Activated CD4-positive, alpha-beta memory T cell treated with anti-CD3 and anti-CD28 coated beads for 36 hours (primary cell): ENCODE measurements at regions of chr9 and their contacts with region 1.

Region 1: DNA sequence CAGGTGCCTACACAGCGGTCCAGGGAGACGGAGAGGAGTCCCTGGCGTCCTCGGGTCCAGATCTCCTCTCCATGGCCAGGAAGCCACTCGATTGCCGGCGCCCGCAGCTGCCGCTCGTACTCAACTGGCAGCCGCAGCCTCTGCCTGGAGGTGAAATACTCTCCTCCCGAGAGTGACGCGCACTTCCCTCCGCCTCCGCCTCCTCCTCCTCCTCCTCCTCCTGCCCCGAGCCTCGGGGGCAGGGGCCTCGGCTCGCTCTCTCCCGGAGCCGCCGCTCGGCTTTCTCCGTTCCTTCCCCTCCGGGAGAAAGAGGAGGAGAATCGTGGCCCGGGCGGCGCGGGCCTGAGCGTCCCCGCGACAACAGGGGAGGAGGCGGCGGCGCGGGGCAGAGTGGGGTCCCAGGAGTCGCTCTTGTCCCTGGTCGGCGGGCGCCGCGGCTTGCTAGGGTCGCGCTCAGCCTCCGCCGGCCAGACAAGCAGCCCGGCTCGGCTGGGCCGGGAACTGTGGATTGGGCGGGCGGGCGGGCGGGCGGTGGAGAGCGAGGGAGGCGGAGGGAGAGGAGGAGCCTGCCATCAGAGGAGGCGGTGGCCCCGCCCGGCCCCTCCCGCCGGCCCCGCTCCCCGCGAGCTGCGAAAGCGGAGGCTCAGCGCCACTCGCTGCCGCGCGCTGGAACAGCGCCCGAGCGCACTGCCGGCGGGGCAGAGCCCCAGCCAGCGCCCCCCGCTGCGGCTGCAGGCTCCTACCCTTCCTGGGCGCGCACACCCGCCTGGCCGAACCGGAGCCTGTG is at the start of gene CEMIP2:
- DNase-seq: peak; percentile 91
- H3K4me3 Mint-ChIP-seq: peak within 1 kb of the TSS; percentile 87
- H3K27ac Mint-ChIP-seq: peak within 1 kb of the TSS; percentile 91
- H3K4me1 Mint-ChIP-seq: peaks cover 29% of the 10 kb centered on the region
- H3K27me3 Mint-ChIP-seq: no peaks in the 10 kb centered on the region
- total RNA-seq, gene CEMIP2: 56.5 to 70.1 TPM

Region 2: DNA sequence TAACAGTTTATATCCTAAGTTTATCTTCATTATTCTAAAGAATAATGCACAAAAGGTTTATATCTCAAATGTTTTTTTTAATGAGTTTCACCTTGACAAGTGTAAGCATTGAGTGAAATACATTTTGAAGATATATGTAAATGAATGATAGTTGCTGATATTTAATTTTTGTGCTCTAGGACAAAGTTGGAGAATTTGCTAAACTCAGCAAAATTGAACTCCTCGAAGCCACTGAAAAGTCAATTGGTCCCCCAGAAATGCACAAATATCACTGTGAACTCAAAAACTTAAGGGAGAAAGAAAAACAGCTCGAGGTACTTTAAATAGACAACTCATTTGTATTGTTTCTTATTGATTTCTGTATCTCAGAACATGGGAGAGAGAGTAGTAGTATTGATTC is 1490.3 kb before region 1 on chr9:
- CTCF ChIA-PET with region 1: no interaction called
- POLR2A ChIA-PET with region 1: no interaction called
- intact Hi-C with region 1: no loop called
- DNase-seq: no peak
- H3K4me3 Mint-ChIP-seq: no peak overlapping the region
- H3K27ac Mint-ChIP-seq: no peak overlapping the region
- H3K4me1 Mint-ChIP-seq: peaks cover 22% of the 10 kb centered on the region
- H3K27me3 Mint-ChIP-seq: no peaks in the 10 kb centered on the region

Region 3: GRCh38 chr9:70413798-70414775 is 1354.5 kb before region 1 on chr9 and contains the start of gene KLF9:
- CTCF ChIA-PET with region 1: no interaction called
- POLR2A ChIA-PET with region 1: no interaction called
- intact Hi-C with region 1: loop called (anchors 5 kb)
- DNase-seq: peak; percentile 96
- H3K4me3 Mint-ChIP-seq: peak within 1 kb of the TSS; percentile 97
- H3K27ac Mint-ChIP-seq: peak within 1 kb of the TSS; percentile 100
- H3K4me1 Mint-ChIP-seq: peaks cover 37% of the 10 kb centered on the region
- H3K27me3 Mint-ChIP-seq: peaks cover 2% of the 10 kb centered on the region
- total RNA-seq, gene KLF9: 23.7 to 24.5 TPM

Region 4: GRCh38 chr9:71506821-71507220 is 261.8 kb before region 1 on chr9:
- CTCF ChIA-PET with region 1: no interaction called
- POLR2A ChIA-PET with region 1: no interaction called
- intact Hi-C with region 1: loop called (anchors 5 kb)
- DNase-seq: no peak
- H3K4me3 Mint-ChIP-seq: no peak overlapping the region
- H3K27ac Mint-ChIP-seq: no peak overlapping the region
- H3K4me1 Mint-ChIP-seq: no peaks in the 10 kb centered on the region
- H3K27me3 Mint-ChIP-seq: no peaks in the 10 kb centered on the region

Region 5: GRCh38 chr9:71704796-71705195 is 63.8 kb before region 1 on chr9:
- CTCF ChIA-PET with region 1: interaction called, 3 read pairs
- POLR2A ChIA-PET with region 1: no interaction called
- intact Hi-C with region 1: loop called (anchors 5 kb)
- DNase-seq: no peak
- H3K4me3 Mint-ChIP-seq: no peak overlapping the region
- H3K27ac Mint-ChIP-seq: peak overlapping the region; percentile 15
- H3K4me1 Mint-ChIP-seq: peaks cover 4% of the 10 kb centered on the region
- H3K27me3 Mint-ChIP-seq: no peaks in the 10 kb centered on the region

Region 6: DNA sequence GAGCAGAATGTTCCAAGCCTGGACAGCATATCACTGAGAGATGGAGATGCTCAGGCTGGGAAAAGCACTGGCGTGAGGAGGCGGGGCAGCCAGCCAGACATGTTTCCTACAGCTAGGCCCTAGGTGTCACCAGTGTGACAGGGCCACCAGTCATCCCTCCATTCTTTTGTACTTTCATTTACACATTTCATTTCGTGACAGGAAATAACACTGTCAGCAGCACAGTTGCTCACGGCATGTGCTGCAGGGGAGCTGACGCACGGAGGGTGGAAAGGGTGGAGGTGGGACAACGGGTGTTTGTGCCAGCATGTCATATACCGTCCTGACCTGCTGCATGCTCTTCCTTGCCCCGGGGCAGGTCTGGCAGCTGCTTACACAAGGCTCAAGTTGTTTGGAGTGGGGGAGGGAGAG is 14.5 kb after region 1 on chr9:
- CTCF ChIA-PET with region 1: interaction called, 56 read pairs
- POLR2A ChIA-PET with region 1: interaction called, 54 read pairs
- intact Hi-C with region 1: loop called (anchors 1 kb)
- DNase-seq: peak; percentile 94
- H3K4me3 Mint-ChIP-seq: peak overlapping the region; percentile 71
- H3K27ac Mint-ChIP-seq: peak overlapping the region; percentile 96
- H3K4me1 Mint-ChIP-seq: peaks cover 43% of the 10 kb centered on the region
- H3K27me3 Mint-ChIP-seq: no peaks in the 10 kb centered on the region

Region 7: GRCh38 chr9:71830929-71831328 is 62.3 kb after region 1 on chr9:
- CTCF ChIA-PET with region 1: no interaction called
- POLR2A ChIA-PET with region 1: no interaction called
- intact Hi-C with region 1: no loop called
- DNase-seq: no peak
- H3K4me3 Mint-ChIP-seq: no peak overlapping the region
- H3K27ac Mint-ChIP-seq: no peak overlapping the region
- H3K4me1 Mint-ChIP-seq: no peaks in the 10 kb centered on the region
- H3K27me3 Mint-ChIP-seq: no peaks in the 10 kb centered on the region

Region 8: GRCh38 chr9:72022841-72023240 is 254.3 kb after region 1 on chr9:
- CTCF ChIA-PET with region 1: interaction called, 5 read pairs
- POLR2A ChIA-PET with region 1: no interaction called
- intact Hi-C with region 1: loop called (anchors 1 kb)
- DNase-seq: no peak
- H3K4me3 Mint-ChIP-seq: no peak overlapping the region
- H3K27ac Mint-ChIP-seq: no peak overlapping the region
- H3K4me1 Mint-ChIP-seq: no peaks in the 10 kb centered on the region
- H3K27me3 Mint-ChIP-seq: no peaks in the 10 kb centered on the region